Colonic mucosa (tissue), 4 donors: ENCODE measurements at regions of chr18 and their contacts with region 1.

Region 1: GRCh38 chr18:45212181-45213039 is 402.9 kb upstream of the SLC14A2 start:
- DNase-seq: peak; percentile 90
- H3K4me3 ChIP-seq: no peak overlapping the region
- H3K27ac ChIP-seq: no peak overlapping the region
- H3K4me1 ChIP-seq: no peaks in the 10 kb centered on the region
- H3K27me3 ChIP-seq: no peaks in the 10 kb centered on the region
- CTCF ChIP-seq: peak; percentile 86

Region 2: DNA sequence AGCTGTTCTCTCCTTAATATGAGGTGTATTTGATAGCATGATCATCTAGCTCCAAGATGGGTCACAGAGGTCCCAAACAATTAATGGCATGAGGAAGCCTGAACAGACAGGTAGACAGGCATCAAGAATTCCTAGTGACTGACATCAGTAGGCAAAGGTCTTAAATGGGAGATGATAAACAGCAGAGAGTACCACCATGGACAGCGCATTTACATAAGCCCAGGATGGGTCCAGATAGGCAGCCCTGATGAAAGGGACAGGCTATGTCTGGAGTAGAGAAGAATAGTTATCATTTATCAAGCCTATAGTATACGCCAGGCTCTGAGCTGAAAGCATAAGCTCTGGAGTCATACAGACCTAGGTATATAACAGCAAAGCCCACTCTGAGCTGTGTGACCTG is 966.4 kb before region 1 on chr18:
- intact Hi-C with region 1: no loop called
- DNase-seq: no peak
- H3K4me3 ChIP-seq: no peak overlapping the region
- H3K27ac ChIP-seq: no peak overlapping the region
- H3K4me1 ChIP-seq: no peaks in the 10 kb centered on the region
- H3K27me3 ChIP-seq: no peaks in the 10 kb centered on the region
- CTCF ChIP-seq: no peak

Region 3: GRCh38 chr18:44901283-44901682 is 311.1 kb before region 1 on chr18:
- intact Hi-C with region 1: loop called (anchors 5 kb)
- DNase-seq: no peak
- H3K4me3 ChIP-seq: no peak overlapping the region
- H3K27ac ChIP-seq: no peak overlapping the region
- H3K4me1 ChIP-seq: no peaks in the 10 kb centered on the region
- H3K27me3 ChIP-seq: no peaks in the 10 kb centered on the region
- CTCF ChIP-seq: peak; percentile 28

Region 4: GRCh38 chr18:45100321-45101105 is 111.9 kb before region 1 on chr18:
- intact Hi-C with region 1: no loop called
- DNase-seq: no peak
- H3K4me3 ChIP-seq: no peak overlapping the region
- H3K27ac ChIP-seq: no peak overlapping the region
- H3K4me1 ChIP-seq: no peaks in the 10 kb centered on the region
- H3K27me3 ChIP-seq: no peaks in the 10 kb centered on the region
- CTCF ChIP-seq: no peak